Naive thymus-derived CD4-positive, alpha-beta T cell (primary cell): ENCODE measurements at regions of chr5 and their contacts with region 1.

Region 1: DNA sequence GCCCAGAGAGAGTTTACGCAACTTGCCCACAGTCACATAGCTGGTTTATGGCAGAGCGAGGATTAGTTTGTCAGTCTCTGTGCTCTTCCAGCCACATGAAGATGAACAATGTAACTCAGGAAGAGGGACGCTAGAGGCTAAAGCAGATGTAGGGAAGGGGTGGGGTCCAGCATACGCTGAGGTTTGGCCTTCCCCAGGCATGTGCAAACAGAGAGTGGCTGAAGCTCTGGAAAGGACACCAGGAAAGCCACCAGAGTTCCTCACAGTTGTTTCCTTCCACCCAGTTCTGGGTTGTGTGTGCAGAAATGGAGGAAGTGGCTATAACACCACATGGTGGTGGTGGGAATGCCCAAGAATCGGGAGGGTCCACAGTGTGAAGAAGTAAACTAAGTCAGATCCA is 60.0 kb downstream of the SNX18 start:
- DNase-seq: no peak
- ATAC-seq: peak; percentile 32
- H3K4me3 ChIP-seq: no peak overlapping the region
- H3K4me3 Mint-ChIP-seq: no peak overlapping the region
- H3K27ac ChIP-seq: no peak overlapping the region
- H3K27ac Mint-ChIP-seq: no peak overlapping the region
- H3K4me1 ChIP-seq: peaks cover 3 to 4% of the 10 kb centered on the region in 2 donors
- H3K4me1 Mint-ChIP-seq: peaks cover 15 to 34% (median 22%) of the 10 kb centered on the region in 7 donors
- H3K27me3 ChIP-seq: no peaks in the 10 kb centered on the region
- H3K27me3 Mint-ChIP-seq: peaks cover 0 to 12% (median 0%) of the 10 kb centered on the region in 5 donors

Region 2: GRCh38 chr5:54295651-54296276 is 281.8 kb before region 1 on chr5:
- CTCF ChIA-PET with region 1: no interaction called
- POLR2A ChIA-PET with region 1: no interaction called
- intact Hi-C with region 1: no loop called
- DNase-seq: no peak
- ATAC-seq: peak; percentile 26
- H3K4me3 ChIP-seq: no peak overlapping the region
- H3K4me3 Mint-ChIP-seq: no peak overlapping the region
- H3K27ac ChIP-seq: no peak overlapping the region
- H3K27ac Mint-ChIP-seq: no peak overlapping the region
- H3K4me1 ChIP-seq: no peaks in the 10 kb centered on the region
- H3K4me1 Mint-ChIP-seq: peaks cover 3 to 76% (median 56%) of the 10 kb centered on the region in 7 donors
- H3K27me3 ChIP-seq: no peaks in the 10 kb centered on the region
- H3K27me3 Mint-ChIP-seq: no peaks in the 10 kb centered on the region

Region 3: GRCh38 chr5:54492178-54492577 is 85.3 kb before region 1 on chr5:
- CTCF ChIA-PET with region 1: no interaction called
- POLR2A ChIA-PET with region 1: no interaction called
- intact Hi-C with region 1: no loop called
- DNase-seq: no peak
- ATAC-seq: no peak
- H3K4me3 ChIP-seq: no peak overlapping the region
- H3K4me3 Mint-ChIP-seq: no peak overlapping the region
- H3K27ac ChIP-seq: no peak overlapping the region
- H3K27ac Mint-ChIP-seq: no peak overlapping the region
- H3K4me1 ChIP-seq: no peaks in the 10 kb centered on the region
- H3K4me1 Mint-ChIP-seq: no peaks in the 10 kb centered on the region
- H3K27me3 ChIP-seq: no peaks in the 10 kb centered on the region
- H3K27me3 Mint-ChIP-seq: peaks cover 0 to 19% (median 4%) of the 10 kb centered on the region in 5 donors

Region 4: GRCh38 chr5:54610197-54610944 is 32.8 kb after region 1 on chr5:
- CTCF ChIA-PET with region 1: no interaction called
- POLR2A ChIA-PET with region 1: no interaction called
- intact Hi-C with region 1: loop called in 1 of 2 experiments (anchors 5 kb)
- DNase-seq: peak in 6 of 9 donors; percentile 8 to 36 (median 22)
- ATAC-seq: peak; percentile 89
- H3K4me3 ChIP-seq: peak overlapping the region; percentile 23
- H3K4me3 Mint-ChIP-seq: peak overlapping the region in 9 of 10 donors; percentile 14 to 75 (median 52)
- H3K27ac ChIP-seq: no peak overlapping the region
- H3K27ac Mint-ChIP-seq: peak overlapping the region in 8 of 9 donors; percentile 4 to 88 (median 50)
- H3K4me1 ChIP-seq: peaks cover 14 to 32% of the 10 kb centered on the region in 2 donors
- H3K4me1 Mint-ChIP-seq: peaks cover 19 to 32% (median 23%) of the 10 kb centered on the region in 7 donors
- H3K27me3 ChIP-seq: no peaks in the 10 kb centered on the region
- H3K27me3 Mint-ChIP-seq: peaks cover 0 to 8% (median 0%) of the 10 kb centered on the region in 5 donors